Esophagus squamous epithelium (tissue), 5 donors: ENCODE measurements at regions of chr7 and their contacts with region 1.

Region 1: GRCh38 chr7:70856866-70857630 is 274.9 kb upstream of the GALNT17 start:
- DNase-seq: no peak
- H3K4me3 ChIP-seq: no peak overlapping the region
- H3K27ac ChIP-seq: no peak overlapping the region
- H3K4me1 ChIP-seq: no peaks in the 10 kb centered on the region
- H3K27me3 ChIP-seq: no peaks in the 10 kb centered on the region
- CTCF ChIP-seq: peak; percentile 63 to 88 (median 79)
- POLR2A ChIP-seq: no peak

Region 2: GRCh38 chr7:71308096-71308495 is 451.0 kb after region 1 on chr7:
- intact Hi-C with region 1: no loop called
- DNase-seq: no peak
- H3K4me3 ChIP-seq: no peak overlapping the region
- H3K27ac ChIP-seq: peak overlapping the region in 3 of 4 donors; percentile 65 to 78 (median 69)
- H3K4me1 ChIP-seq: peaks cover 0 to 10% (median 0%) of the 10 kb centered on the region in 3 donors
- H3K27me3 ChIP-seq: no peaks in the 10 kb centered on the region
- CTCF ChIP-seq: no peak
- POLR2A ChIP-seq: no peak

Region 3: DNA sequence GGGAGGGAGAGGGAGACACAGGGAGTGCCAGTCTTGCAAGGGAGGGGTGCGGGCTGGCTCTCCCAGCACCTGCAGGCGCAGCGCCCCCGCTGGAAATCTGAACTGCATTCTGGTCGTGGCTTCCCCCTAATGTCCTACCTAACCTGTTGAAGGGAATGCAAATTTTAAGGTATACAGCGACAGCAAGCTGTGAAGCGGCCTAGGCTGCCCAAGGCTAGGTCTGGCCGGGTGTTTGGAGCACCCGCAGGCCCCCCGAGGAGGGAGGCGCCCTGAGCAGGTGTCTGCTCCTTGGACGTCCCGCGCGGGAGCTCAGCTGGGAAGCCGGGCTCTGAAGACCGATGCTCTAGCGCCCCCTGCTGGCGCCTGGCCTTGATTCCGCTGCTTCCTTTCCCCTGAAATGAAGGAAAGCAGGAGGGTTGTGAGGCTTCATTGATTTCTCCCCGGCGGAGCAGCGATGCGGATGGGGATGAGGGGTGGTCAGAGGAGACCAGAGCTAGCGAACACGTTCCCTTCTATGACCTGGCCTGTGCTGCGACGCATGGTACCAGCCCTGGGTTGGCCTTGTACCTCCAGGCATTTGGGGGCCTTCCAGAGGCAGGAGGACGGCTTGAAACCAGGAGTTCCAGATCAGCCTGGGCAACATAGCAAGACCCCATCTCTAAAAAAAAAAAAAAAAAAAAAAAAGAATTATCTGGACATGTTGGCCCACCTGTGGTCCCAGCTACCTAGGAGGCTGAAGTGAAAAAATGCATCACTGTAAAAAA is 876.2 kb after region 1 on chr7:
- intact Hi-C with region 1: loop called (anchors 2 kb)
- DNase-seq: no peak
- H3K4me3 ChIP-seq: peak overlapping the region in 1 of 4 donors; percentile 41
- H3K27ac ChIP-seq: no peak overlapping the region
- H3K4me1 ChIP-seq: peaks cover 4 to 7% (median 4%) of the 10 kb centered on the region in 3 donors
- H3K27me3 ChIP-seq: peaks cover 0 to 6% (median 0%) of the 10 kb centered on the region in 4 donors
- CTCF ChIP-seq: peak; percentile 69 to 91 (median 82)
- POLR2A ChIP-seq: no peak